Sigmoid colon (tissue), 7 donors: ENCODE measurements at regions of chr7 and their contacts with region 1.

Region 1: DNA sequence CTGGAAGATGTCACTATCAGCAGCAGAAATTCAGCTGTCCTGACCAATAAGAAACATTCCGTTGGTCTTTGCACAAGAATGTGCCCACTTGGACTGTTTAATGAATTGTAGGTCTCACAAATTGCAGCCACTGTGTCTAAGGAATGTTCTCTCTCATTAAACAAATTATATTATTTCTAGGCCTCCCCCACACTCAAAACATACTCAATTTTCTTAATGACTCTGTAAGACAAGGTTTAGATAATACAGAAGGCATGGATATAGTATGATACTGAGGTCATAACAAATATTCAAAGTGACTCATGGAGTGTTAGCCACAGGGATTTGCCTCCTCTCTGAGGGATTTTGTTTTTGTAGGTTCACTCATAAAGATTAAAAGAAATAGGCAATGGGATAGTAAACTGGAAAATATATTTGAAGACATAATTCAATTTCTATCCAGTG is 197.5 kb downstream of the PTN start:
- DNase-seq: no peak
- H3K4me3 ChIP-seq: peak overlapping the region in 1 of 4 donors; percentile 15
- H3K27ac ChIP-seq: peak overlapping the region; percentile 53 to 79 (median 71)
- H3K4me1 ChIP-seq: peaks cover 0 to 53% (median 32%) of the 10 kb centered on the region in 4 donors
- H3K27me3 ChIP-seq: no peaks in the 10 kb centered on the region
- CTCF ChIP-seq: no peak
- EP300 ChIP-seq: peak in 1 of 4 donors; percentile 28
- POLR2A ChIP-seq: no peak

Region 2: GRCh38 chr7:136142583-136142982 is 1003.5 kb before region 1 on chr7:
- intact Hi-C with region 1: loop called (anchors 10 kb)
- DNase-seq: no peak
- H3K4me3 ChIP-seq: no peak overlapping the region
- H3K27ac ChIP-seq: peak overlapping the region in 3 of 4 donors; percentile 14 to 64 (median 60)
- H3K4me1 ChIP-seq: peaks cover 2 to 66% (median 26%) of the 10 kb centered on the region in 4 donors
- H3K27me3 ChIP-seq: no peaks in the 10 kb centered on the region
- CTCF ChIP-seq: no peak
- EP300 ChIP-seq: peak in 3 of 4 donors; percentile 28 to 78 (median 67)
- POLR2A ChIP-seq: no peak

Region 3: DNA sequence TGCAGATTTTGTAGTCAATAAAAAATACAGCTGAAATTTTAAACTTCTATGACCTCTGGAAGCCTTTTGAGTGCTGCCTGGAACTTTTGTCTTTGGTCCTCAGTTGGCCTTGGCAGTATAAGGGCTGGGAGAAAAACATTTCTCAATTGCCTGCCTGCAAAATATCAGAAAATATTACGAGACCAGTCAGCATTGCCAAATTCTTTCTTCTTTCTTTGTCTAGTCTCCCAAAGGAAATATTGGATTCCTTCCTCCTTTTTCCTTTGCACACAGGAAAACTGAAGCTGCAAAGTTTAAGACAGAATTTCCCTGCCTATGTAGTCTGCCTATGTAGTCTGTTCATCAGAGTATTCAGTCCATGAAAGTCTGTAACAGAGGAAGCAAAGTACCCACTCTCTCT is 181.7 kb before region 1 on chr7:
- intact Hi-C with region 1: loop called (anchors 10 kb)
- DNase-seq: no peak
- H3K4me3 ChIP-seq: no peak overlapping the region
- H3K27ac ChIP-seq: peak overlapping the region in 3 of 4 donors; percentile 64 to 70 (median 65)
- H3K4me1 ChIP-seq: peaks cover 0 to 63% (median 44%) of the 10 kb centered on the region in 4 donors
- H3K27me3 ChIP-seq: no peaks in the 10 kb centered on the region
- CTCF ChIP-seq: no peak
- EP300 ChIP-seq: peak in 3 of 4 donors; percentile 22 to 77 (median 47)
- POLR2A ChIP-seq: no peak

Region 4: GRCh38 chr7:137006293-137006692 is 139.7 kb before region 1 on chr7:
- intact Hi-C with region 1: loop called (anchors 10 kb)
- DNase-seq: no peak
- H3K4me3 ChIP-seq: peak overlapping the region in 1 of 4 donors; percentile 3
- H3K27ac ChIP-seq: peak overlapping the region; percentile 59 to 76 (median 69)
- H3K4me1 ChIP-seq: peaks cover 0 to 51% (median 35%) of the 10 kb centered on the region in 4 donors
- H3K27me3 ChIP-seq: no peaks in the 10 kb centered on the region
- CTCF ChIP-seq: no peak
- EP300 ChIP-seq: no peak
- POLR2A ChIP-seq: no peak

Region 5: GRCh38 chr7:137081321-137082093 is 64.5 kb before region 1 on chr7:
- intact Hi-C with region 1: loop called (anchors 5 kb)
- DNase-seq: peak; percentile 91
- H3K4me3 ChIP-seq: no peak overlapping the region
- H3K27ac ChIP-seq: peak overlapping the region in 3 of 4 donors; percentile 40 to 71 (median 70)
- H3K4me1 ChIP-seq: peaks cover 0 to 54% (median 47%) of the 10 kb centered on the region in 4 donors
- H3K27me3 ChIP-seq: no peaks in the 10 kb centered on the region
- CTCF ChIP-seq: no peak
- EP300 ChIP-seq: peak in 2 of 4 donors; percentile 0 to 54
- POLR2A ChIP-seq: no peak

Region 6: DNA sequence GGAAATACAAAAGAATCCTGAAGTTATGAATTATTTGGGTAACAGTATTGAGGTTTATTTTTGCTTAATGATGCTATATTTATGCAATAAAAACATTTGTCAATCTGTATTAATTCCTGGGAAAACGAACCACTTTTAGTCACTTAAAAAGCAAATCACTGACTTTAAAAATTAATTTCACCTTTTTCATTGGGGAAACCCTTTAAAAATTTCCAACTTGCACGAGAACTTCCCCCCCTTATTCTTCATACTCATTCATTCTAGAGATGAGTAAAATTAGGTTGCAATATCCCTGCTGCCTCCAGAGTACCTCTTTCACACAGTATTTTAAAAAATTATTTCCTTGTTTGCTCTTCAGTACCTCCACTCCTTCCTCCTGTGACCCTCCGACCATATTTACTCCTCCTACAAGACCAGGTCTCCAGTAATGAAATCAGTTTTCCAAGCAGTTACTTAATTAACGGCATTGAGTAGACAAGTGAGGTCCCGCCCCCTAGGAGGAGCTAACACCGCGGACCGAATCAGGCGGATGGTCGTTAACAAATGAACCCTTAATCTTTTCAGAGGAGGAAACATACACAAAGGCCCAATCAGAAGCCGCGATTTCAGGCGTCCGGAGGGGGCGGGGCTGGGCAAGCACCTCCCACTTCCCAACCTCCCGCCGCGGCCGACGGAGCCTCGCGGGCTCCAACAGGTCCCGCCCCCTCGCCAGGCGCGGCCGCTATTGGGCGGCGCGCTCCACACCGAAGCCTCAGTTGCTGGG is 1313.6 kb after region 1 on chr7:
- intact Hi-C with region 1: no loop called
- DNase-seq: peak; percentile 98
- H3K4me3 ChIP-seq: peak overlapping the region; percentile 6 to 94 (median 56)
- H3K27ac ChIP-seq: peak overlapping the region; percentile 42 to 95 (median 71)
- H3K4me1 ChIP-seq: peaks cover 0 to 15% (median 8%) of the 10 kb centered on the region in 4 donors
- H3K27me3 ChIP-seq: no peaks in the 10 kb centered on the region
- CTCF ChIP-seq: peak; percentile 13 to 74 (median 27)
- EP300 ChIP-seq: no peak
- POLR2A ChIP-seq: no peak